PC-9 (cell line): ENCODE measurements at regions of chr7 and their contacts with region 1.

Region 1: DNA sequence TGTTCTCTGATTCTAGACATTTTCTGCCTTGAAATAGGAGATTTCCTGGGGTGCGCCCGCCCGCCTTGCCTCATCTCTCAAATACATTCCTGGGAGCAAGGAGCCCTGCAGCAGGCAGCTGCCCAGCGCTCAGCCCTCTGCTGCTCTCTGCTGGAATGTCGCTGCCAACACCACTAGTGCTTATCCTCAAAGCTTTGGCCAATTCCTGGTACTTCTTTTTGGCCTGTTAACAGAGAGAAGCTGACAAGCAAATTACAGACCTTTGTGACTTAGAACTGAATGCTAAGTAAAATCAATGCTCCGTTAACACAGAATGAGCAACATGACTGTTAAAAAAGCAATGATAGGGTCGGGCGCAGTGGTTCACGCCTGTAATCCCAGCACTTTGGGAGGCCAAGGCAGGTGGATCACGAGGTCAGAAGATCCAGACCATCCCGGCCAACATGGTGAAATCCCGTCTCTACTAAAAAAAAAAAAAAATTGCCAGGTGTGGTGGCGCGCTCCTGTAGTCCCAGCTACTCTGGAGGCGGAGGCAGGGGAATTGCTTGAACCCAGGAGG is 41.9 kb upstream of the SYPL1 start:
- DNase-seq: peak; percentile 68 to 89
- H3K4me3 ChIP-seq: no peak overlapping the region
- H3K27ac ChIP-seq: no peak overlapping the region
- H3K4me1 ChIP-seq: peaks cover 12% of the 10 kb centered on the region
- H3K27me3 ChIP-seq: no peaks in the 10 kb centered on the region
- CTCF ChIP-seq: peak; percentile 94

Region 2: DNA sequence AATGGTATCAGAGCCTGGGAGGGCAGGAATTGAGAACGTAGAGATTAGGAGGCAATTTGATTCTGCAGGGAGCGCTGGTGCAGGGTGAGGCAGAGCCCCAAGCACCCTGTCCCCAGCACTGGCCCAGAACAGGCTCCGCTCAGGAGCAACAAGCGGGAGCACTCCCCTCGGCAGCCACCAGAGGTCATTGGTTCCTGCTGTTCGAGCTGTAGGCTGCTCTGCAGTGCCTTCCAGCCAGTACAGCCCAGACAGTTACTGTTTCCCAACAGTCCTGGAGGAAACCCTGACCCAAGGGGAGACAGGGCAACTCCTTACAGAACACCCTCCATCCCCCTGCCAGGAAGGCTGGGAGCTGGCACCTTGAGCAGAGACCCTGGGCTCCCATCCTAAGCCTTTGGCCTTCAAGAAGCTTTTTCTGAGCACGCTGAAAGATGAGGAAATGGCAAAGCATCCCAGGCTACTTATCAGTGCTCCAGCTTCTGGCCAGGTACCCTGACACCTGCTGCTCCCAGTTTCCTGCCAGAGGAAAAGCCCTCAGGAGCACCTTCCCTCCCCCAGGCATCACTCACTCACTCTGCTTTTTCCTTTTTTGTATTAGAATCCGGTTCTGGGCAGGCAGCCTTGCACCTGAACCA is 501.5 kb before region 1 on chr7:
- CTCF ChIA-PET with region 1: no interaction called
- POLR2A ChIA-PET with region 1: no interaction called
- intact Hi-C with region 1: loop called (anchors 5 kb)
- DNase-seq: peak; percentile 43 to 79
- H3K4me3 ChIP-seq: no peak overlapping the region
- H3K27ac ChIP-seq: no peak overlapping the region
- H3K4me1 ChIP-seq: peaks cover 47% of the 10 kb centered on the region
- H3K27me3 ChIP-seq: no peaks in the 10 kb centered on the region
- CTCF ChIP-seq: peak; percentile 87

Region 3: GRCh38 chr7:105934572-105935185 is 219.3 kb before region 1 on chr7:
- CTCF ChIA-PET with region 1: interaction called, 10 read pairs
- POLR2A ChIA-PET with region 1: no interaction called
- intact Hi-C with region 1: loop called (anchors 2 kb)
- DNase-seq: peak in 1 of 2 experiments; percentile 11
- H3K4me3 ChIP-seq: no peak overlapping the region
- H3K27ac ChIP-seq: no peak overlapping the region
- H3K4me1 ChIP-seq: no peaks in the 10 kb centered on the region
- H3K27me3 ChIP-seq: no peaks in the 10 kb centered on the region
- CTCF ChIP-seq: peak; percentile 53

Region 4: DNA sequence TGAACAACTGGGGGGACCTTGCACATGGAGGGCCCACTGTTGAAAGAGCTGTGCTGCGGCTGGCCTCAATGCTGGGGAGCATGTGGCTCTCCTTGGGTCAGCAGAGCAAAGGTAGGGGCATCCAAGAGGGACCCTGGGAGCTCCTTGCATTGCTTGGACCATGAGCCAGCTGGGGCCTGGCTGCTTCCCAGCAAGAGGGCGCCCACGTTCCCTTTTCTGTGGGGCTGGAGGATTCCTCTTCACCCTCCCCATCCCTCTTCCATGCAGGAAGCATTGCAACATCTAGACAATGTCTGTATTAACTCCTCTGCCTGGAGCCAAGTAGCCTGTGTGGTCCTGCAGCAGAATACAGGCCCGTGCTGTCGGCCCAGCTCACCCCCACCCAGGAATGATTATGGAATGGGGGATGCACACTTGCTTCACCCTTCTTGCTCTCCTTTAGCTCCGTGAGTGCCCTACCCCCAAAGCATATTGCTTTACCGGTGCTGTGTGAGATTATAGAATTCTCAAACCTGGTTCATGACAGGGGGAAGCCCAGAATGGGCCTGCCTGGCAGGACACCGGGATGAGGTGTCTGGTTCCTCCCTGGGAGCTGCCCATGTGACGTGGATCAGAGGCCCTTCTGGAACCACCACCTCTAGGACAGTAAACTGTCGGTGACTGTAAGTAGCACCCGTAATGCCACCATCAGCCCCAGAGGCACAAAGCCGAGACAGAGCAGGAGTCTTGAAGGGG is 103.8 kb before region 1 on chr7:
- CTCF ChIA-PET with region 1: interaction called, 8 read pairs
- POLR2A ChIA-PET with region 1: no interaction called
- intact Hi-C with region 1: loop called (anchors 1 kb)
- DNase-seq: peak in 1 of 2 experiments; percentile 32
- H3K4me3 ChIP-seq: no peak overlapping the region
- H3K27ac ChIP-seq: no peak overlapping the region
- H3K4me1 ChIP-seq: no peaks in the 10 kb centered on the region
- H3K27me3 ChIP-seq: 0 out of 2 replicates have a peak, but pooled peaks cover 7% of the 10 kb centered on the region
- CTCF ChIP-seq: 0 out of 2 replicates have a peak, but pooled peaks have one; percentile 18